GM10248 (cell line): ENCODE measurements at regions of chr1 and their contacts with region 1.

Region 1: DNA sequence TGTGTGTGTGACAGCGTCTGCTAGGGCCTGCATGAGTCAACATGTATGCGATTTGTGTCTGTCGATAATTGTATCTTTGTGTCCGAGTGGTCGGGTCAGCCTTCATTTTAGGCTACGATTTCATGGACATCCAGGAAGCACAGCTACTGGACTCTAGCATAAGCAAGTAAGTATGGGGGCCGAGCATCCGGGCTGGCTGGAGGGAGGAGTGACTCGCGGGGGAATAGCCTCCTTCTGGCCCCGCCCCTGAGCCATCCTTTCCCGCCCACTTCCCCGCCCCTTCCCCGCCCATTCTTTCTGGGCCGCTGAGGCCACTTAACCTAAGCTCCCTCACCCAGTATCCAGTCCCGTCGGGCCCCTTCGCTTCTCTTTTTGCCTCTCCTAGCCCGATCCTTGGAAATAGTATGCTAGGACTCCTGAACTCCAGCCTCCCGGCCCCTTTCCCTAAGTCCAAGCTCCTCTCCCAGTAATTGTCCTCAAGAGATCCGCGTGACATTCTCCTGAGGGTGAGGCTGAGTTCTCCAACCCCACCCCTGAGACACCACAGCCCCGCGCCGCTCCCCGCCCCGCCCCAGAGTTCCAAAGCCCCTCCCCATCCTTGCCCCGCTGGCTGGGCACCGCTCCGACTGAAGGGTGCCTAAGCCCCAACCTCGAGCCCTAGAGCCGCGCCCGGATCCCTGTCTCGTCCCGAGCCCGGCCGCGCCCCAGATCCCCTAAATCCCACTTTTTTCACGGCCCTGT is 1.2 kb downstream of the MAP3K6 start:
- DNase-seq: peak; percentile 94
- CTCF ChIP-seq: no peak

Region 2: DNA sequence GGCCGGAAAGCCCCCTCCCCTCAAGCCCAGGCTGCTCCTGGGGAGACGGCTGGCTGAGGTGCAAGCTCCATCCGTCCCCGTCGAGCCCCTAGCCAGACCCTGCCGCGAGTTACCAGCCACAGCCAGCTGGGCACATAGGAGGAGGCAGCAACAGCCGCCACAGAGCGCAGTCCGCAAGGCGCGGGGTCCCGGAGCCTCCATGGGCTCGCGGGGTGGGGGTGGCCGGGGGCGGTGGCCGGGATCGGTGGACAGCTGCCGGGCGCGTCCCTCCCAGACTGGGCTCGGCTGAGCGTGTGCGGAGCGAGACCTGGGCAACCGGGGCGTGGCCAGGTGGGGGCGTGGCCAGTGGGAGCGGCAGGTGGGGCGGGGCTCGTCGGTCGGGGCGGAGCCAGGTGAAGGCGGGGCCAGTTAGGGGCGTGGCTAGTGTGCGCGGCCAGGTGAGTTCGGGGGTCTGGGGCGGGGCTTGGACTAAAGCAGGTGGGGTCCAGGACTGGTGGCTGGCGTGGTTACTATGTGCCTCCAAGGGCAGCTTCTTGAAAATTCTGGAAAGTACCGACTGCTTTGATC is 17.6 kb after region 1 on chr1 and contains the start of gene CD164L2:
- CTCF ChIA-PET with region 1: interaction called, 32 read pairs
- POLR2A ChIA-PET with region 1: no interaction called
- DNase-seq: no peak
- CTCF ChIP-seq: no peak

Region 3: DNA sequence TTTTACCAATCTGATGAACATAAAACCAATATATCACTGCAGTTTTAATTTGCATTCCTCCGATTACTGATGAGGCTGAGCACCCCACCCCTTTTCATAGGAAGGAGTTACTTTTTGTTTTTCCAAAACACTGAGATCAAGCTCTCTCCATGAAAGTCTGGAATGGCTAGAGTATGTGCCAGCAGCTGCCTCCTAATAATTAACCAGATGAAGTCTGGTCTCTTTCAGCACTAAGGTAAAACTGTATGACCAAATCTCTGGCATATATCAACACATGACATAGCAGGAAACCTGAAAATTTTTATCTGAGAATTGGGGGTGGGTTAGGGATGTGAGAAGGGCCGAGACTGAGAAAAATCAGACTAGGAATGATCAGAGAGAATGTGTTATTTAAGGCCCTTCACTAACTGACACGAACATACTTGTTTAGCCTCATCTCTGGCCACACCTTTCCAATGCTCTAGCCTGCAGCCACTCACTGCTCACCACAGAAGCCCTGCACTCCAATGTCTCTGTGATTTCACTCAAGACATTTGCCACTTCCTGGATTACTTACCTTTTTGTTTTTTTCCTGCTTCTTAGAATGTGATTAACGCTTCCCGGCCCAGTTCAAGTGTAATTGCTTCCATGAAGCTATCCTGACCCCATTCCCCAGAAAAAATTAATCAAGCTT is 89.7 kb after region 1 on chr1:
- CTCF ChIA-PET with region 1: no interaction called
- POLR2A ChIA-PET with region 1: no interaction called
- DNase-seq: no peak
- CTCF ChIP-seq: no peak

Region 4: DNA sequence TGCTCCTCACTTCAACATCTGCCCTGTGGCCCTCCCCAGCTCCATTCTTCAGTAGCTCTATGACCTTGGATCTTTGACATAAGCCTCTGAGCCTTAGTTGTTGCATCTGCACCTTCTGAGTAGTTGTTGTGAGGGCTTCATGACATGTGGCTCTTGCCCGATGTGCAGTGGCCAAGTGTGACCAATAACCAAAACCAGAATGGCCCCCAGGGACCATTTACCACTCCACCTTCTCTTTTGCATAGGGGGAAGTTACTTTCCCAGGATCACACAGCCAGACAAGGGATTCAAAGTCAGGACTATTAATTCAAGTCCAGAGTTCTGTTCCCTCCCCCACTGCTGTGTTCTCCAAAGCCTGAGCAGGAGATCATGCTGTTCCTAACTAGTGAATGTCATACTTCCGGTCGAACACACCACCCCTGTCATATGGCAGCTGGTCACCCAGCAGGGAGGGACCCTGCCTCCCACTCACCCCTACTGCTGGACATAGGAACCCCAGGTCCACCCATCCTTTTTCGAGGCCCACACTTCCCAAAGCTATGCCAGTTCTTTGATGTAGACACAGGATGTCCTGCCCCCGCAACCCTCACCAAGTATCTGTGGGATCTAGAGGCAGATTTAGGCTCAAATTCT is 265.4 kb after region 1 on chr1:
- CTCF ChIA-PET with region 1: no interaction called
- POLR2A ChIA-PET with region 1: no interaction called
- DNase-seq: no peak
- CTCF ChIP-seq: no peak

Region 5: DNA sequence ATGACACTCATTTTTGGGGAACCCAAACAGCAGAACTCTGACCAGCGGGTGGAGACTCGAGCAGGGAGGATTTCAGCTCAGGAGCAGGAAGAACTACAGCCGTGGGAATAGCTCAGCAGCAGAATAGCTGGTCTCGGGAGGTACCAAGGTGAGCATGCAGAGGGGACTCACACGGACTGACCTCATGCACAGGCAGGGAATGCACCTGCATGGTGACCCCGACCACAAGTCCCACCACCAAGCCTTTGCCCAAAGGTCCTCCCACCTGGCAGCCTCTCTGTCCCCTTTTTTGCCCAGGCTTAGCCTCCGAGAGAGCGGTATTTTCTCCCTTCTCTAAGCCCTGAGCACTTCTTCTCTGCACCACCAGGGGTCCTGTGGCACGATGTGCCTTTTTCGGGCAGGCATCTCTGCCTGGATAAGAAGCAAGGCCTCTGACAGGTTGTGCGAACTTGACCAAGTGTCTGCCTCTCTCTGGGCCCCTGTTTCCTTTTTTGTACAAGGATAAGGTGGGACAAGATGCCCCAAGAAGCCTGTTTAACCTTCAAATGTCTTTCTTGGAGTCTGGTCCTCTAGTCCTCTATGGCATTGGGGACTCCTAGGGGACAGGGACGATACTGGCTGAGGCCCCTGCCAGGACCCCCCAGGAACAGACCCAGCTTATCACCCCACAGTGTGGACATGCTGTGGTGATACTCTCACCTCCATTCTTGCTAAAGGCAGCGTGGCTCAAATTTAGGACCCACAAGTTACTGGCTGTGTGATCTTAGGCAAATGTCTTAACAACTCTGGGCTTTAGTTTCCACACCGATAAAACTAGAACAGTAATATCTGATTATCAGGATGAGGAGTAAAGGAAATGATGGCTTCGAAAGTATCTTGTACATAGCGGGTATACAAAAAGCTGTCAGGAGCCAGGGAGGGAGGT is 278.4 kb after region 1 on chr1:
- CTCF ChIA-PET with region 1: no interaction called
- POLR2A ChIA-PET with region 1: no interaction called
- DNase-seq: peak; percentile 72
- CTCF ChIP-seq: peak; percentile 80